ENCODE measurements at regions of chr10 and their contacts with region 1.

Region 1: DNA sequence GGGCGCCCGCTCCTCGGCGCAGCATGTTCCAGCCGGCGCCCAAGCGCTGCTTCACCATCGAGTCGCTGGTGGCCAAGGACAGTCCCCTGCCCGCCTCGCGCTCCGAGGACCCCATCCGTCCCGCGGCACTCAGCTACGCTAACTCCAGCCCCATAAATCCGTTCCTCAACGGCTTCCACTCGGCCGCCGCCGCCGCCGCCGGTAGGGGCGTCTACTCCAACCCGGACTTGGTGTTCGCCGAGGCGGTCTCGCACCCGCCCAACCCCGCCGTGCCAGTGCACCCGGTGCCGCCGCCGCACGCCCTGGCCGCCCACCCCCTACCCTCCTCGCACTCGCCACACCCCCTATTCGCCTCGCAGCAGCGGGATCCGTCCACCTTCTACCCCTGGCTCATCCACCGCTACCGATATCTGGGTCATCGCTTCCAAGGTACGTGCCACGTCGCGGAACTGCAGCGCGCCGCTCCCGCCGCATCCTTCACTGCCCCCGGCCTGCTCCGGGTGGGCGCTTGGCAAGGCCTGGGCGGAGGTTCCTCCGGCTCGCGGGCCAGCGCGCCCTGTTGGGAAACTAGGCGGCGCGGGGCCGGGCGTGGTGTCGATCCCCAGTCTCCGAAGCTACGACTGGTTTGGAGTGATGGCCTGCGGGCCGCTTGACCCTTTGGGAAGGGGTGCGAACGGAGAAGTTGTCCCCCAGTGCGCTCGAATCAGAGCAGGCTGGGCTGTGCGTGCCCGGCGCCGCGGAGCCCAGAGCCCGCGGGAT is 878 bp downstream of the EMX2 start:
- DNase-seq: peak; percentile 57
- H3K4me3 ChIP-seq: peak overlapping the region; percentile 26
- H3K27ac ChIP-seq: no peak overlapping the region
- H3K4me1 ChIP-seq: peaks cover 11% of the 10 kb centered on the region
- H3K27me3 ChIP-seq: peaks cover 100% of the 10 kb centered on the region
- CTCF ChIP-seq: no peak

Region 2: GRCh38 chr10:116382290-116382689 is 1161.1 kb before region 1 on chr10:
- CTCF ChIA-PET with region 1: no interaction called
- POLR2A ChIA-PET with region 1: no interaction called
- intact Hi-C with region 1: no loop called
- DNase-seq: no peak
- H3K4me3 ChIP-seq: no peak overlapping the region
- H3K27ac ChIP-seq: no peak overlapping the region
- H3K4me1 ChIP-seq: no peaks in the 10 kb centered on the region
- H3K27me3 ChIP-seq: peaks cover 70% of the 10 kb centered on the region
- CTCF ChIP-seq: no peak

Region 3: GRCh38 chr10:117699436-117700075 is 156.1 kb after region 1 on chr10:
- CTCF ChIA-PET with region 1: no interaction called
- POLR2A ChIA-PET with region 1: no interaction called
- intact Hi-C with region 1: no loop called
- DNase-seq: no peak
- H3K4me3 ChIP-seq: no peak overlapping the region
- H3K27ac ChIP-seq: no peak overlapping the region
- H3K4me1 ChIP-seq: no peaks in the 10 kb centered on the region
- H3K27me3 ChIP-seq: peaks cover 22% of the 10 kb centered on the region
- CTCF ChIP-seq: no peak

Region 4: GRCh38 chr10:118459726-118460193 is 916.3 kb after region 1 on chr10:
- CTCF ChIA-PET with region 1: interaction called, 14 read pairs
- POLR2A ChIA-PET with region 1: no interaction called
- intact Hi-C with region 1: no loop called
- DNase-seq: peak; percentile 72
- H3K4me3 ChIP-seq: no peak overlapping the region
- H3K27ac ChIP-seq: no peak overlapping the region
- H3K4me1 ChIP-seq: no peaks in the 10 kb centered on the region
- H3K27me3 ChIP-seq: no peaks in the 10 kb centered on the region
- CTCF ChIP-seq: peak; percentile 83